Heart left ventricle (tissue), 16 donors: ENCODE measurements at regions of chr6 and their contacts with region 1.

Region 1: GRCh38 chr6:130923350-130923749 is 96.1 kb downstream of the SMLR1 start:
- DNase-seq: no peak
- ATAC-seq: no peak
- H3K4me3 ChIP-seq: no peak overlapping the region
- H3K27ac ChIP-seq: no peak overlapping the region
- H3K4me1 ChIP-seq: peaks cover 0 to 7% (median 0%) of the 10 kb centered on the region in 12 donors
- H3K27me3 ChIP-seq: no peaks in the 10 kb centered on the region
- CTCF ChIP-seq: no peak
- POLR2A ChIP-seq: no peak

Region 2: GRCh38 chr6:130933712-130934200 is 10.4 kb after region 1 on chr6:
- intact Hi-C with region 1: loop called in 1 of 10 experiments (anchors 1 kb)
- DNase-seq: no peak
- ATAC-seq: peak in 2 of 4 donors; percentile 26 to 36
- H3K4me3 ChIP-seq: no peak overlapping the region
- H3K27ac ChIP-seq: no peak overlapping the region
- H3K4me1 ChIP-seq: peaks cover 0 to 77% (median 12%) of the 10 kb centered on the region in 12 donors
- H3K27me3 ChIP-seq: no peaks in the 10 kb centered on the region
- CTCF ChIP-seq: no peak
- POLR2A ChIP-seq: no peak

Region 3: GRCh38 chr6:131250122-131250521 is 326.8 kb after region 1 on chr6:
- intact Hi-C with region 1: no loop called
- DNase-seq: peak; percentile 49 to 71 (median 61)
- ATAC-seq: peak; percentile 60 to 98 (median 94)
- H3K4me3 ChIP-seq: peak overlapping the region in 11 of 12 donors; percentile 12 to 55 (median 43)
- H3K27ac ChIP-seq: peak overlapping the region in 1 of 12 donors; percentile 21
- H3K4me1 ChIP-seq: peaks cover 0 to 23% (median 9%) of the 10 kb centered on the region in 12 donors
- H3K27me3 ChIP-seq: no peaks in the 10 kb centered on the region
- CTCF ChIP-seq: no peak
- POLR2A ChIP-seq: no peak